Body of pancreas (tissue), 4 donors: ENCODE measurements at regions of chr1 and their contacts with region 1.

Region 1: GRCh38 chr1:43529206-43529731 is 1.4 kb upstream of the PTPRF start:
- DNase-seq: peak; percentile 87 to 91 (median 89)
- ATAC-seq: peak; percentile 69
- H3K4me3 ChIP-seq: no peak overlapping the region
- H3K27ac ChIP-seq: peak overlapping the region in 3 of 4 donors; percentile 15 to 79 (median 40)
- H3K4me1 ChIP-seq: peaks cover 46% of the 10 kb centered on the region
- H3K27me3 ChIP-seq: no peaks in the 10 kb centered on the region
- CTCF ChIP-seq: peak; percentile 82 to 99 (median 97)
- POLR2A ChIP-seq: no peak

Region 2: GRCh38 chr1:43573066-43573800 is 44.0 kb after region 1 on chr1:
- intact Hi-C with region 1: loop called (anchors 5 kb)
- DNase-seq: no peak
- ATAC-seq: no peak
- H3K4me3 ChIP-seq: no peak overlapping the region
- H3K27ac ChIP-seq: no peak overlapping the region
- H3K4me1 ChIP-seq: no peaks in the 10 kb centered on the region
- H3K27me3 ChIP-seq: no peaks in the 10 kb centered on the region
- CTCF ChIP-seq: no peak
- POLR2A ChIP-seq: no peak

Region 3: GRCh38 chr1:43648221-43648847 is 119.1 kb after region 1 on chr1:
- intact Hi-C with region 1: loop called (anchors 5 kb)
- DNase-seq: no peak
- ATAC-seq: no peak
- H3K4me3 ChIP-seq: no peak overlapping the region
- H3K27ac ChIP-seq: no peak overlapping the region
- H3K4me1 ChIP-seq: peaks cover 15% of the 10 kb centered on the region
- H3K27me3 ChIP-seq: no peaks in the 10 kb centered on the region
- CTCF ChIP-seq: no peak
- POLR2A ChIP-seq: no peak

Region 4: DNA sequence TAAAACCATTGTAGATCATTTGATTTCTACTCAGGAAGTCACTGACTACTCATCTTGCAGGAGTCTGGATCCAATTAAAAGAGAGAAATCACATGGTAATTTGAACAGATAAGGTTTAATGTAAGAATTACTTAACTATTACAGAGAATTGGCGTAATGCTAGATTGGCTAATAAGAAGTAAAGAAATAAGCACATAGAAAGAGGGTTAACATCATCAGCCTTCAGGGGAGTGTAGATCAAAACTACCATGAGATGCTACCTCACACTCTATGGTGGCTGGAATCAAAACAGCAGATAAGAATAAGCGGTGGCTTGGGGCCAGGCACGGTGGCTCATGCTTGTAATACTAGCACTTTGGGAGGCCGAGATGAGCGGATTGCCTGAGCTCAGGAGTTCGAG is 189.8 kb after region 1 on chr1:
- intact Hi-C with region 1: no loop called
- DNase-seq: no peak
- ATAC-seq: no peak
- H3K4me3 ChIP-seq: no peak overlapping the region
- H3K27ac ChIP-seq: no peak overlapping the region
- H3K4me1 ChIP-seq: no peaks in the 10 kb centered on the region
- H3K27me3 ChIP-seq: no peaks in the 10 kb centered on the region
- CTCF ChIP-seq: no peak
- POLR2A ChIP-seq: no peak